ENCODE measurements at regions of chr21 and their contacts with region 1.

Region 1: GRCh38 chr21:37711836-37712568 is 204.3 kb downstream of the KCNJ6 start:
- DNase-seq: peak; percentile 81 to 89
- ATAC-seq: peak; percentile 82
- H3K4me3 ChIP-seq: no peak overlapping the region
- H3K27ac ChIP-seq: no peak overlapping the region
- H3K4me1 ChIP-seq: peaks cover 0 to 2% of the 10 kb centered on the region in 2 donors
- H3K27me3 ChIP-seq: no peaks in the 10 kb centered on the region

Region 2: GRCh38 chr21:37916310-37917051 is 204.5 kb after region 1 on chr21 and contains the start of gene KCNJ6:
- intact Hi-C with region 1: loop called (anchors 5 kb)
- DNase-seq: peak in 1 of 2 donors; percentile 56
- ATAC-seq: peak; percentile 48
- H3K4me3 ChIP-seq: peak within 1 kb of the TSS in 1 of 2 donors; percentile 11
- H3K27ac ChIP-seq: no peak within 1 kb of the TSS
- H3K4me1 ChIP-seq: no peaks in the 10 kb centered on the region
- H3K27me3 ChIP-seq: peaks cover 0 to 2% of the 10 kb centered on the region in 2 donors
- total RNA-seq, gene KCNJ6: 0.16 TPM in 1 of 2 donors, not detected in the other

Region 3: DNA sequence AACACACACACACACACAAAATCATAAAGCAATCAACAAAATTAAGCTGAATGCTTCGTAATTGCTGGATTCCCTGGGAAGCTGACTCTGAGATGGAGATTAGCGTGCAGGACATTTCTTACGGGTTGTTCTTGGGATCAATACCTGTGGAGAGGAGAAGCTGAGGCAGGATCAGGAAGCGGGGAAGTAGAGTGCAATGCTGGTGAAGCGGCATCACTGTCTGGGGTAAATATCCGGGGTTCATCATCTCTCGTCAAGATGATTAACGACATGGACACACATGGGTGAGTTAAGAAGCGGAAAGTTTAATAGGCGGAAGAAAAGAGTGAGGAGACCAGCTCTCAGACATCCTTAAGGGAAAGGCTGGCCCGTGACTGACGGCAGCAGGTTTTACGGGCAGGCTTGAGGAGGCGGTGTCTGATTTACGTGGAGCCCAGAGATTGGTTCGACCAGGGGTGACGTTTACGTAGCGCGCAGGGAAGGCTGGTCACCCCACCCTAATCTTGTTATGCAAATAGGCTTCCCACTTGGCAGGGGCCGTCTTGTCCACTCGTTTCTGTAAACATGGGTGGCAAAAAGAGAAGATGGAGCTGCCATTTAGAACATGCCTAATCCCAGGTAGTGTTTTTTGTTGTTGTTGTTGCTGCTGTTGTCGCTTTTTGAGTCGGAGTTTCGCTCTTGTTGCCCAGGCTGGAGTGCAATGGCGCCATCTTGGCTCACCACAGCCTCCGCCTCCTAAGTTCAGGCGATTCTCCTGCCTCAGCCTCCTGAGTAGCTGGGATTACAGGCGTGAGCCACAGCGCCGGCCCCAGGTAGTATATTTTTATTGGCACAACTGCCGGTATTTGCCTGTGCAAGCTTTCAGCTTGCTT is 409.2 kb after region 1 on chr21:
- intact Hi-C with region 1: loop called (anchors 2 to 5 kb)
- DNase-seq: no peak
- ATAC-seq: no peak
- H3K4me3 ChIP-seq: no peak overlapping the region
- H3K27ac ChIP-seq: no peak overlapping the region
- H3K4me1 ChIP-seq: peaks cover 0 to 1% of the 10 kb centered on the region in 2 donors
- H3K27me3 ChIP-seq: peaks cover 0 to 1% of the 10 kb centered on the region in 2 donors

Region 4: DNA sequence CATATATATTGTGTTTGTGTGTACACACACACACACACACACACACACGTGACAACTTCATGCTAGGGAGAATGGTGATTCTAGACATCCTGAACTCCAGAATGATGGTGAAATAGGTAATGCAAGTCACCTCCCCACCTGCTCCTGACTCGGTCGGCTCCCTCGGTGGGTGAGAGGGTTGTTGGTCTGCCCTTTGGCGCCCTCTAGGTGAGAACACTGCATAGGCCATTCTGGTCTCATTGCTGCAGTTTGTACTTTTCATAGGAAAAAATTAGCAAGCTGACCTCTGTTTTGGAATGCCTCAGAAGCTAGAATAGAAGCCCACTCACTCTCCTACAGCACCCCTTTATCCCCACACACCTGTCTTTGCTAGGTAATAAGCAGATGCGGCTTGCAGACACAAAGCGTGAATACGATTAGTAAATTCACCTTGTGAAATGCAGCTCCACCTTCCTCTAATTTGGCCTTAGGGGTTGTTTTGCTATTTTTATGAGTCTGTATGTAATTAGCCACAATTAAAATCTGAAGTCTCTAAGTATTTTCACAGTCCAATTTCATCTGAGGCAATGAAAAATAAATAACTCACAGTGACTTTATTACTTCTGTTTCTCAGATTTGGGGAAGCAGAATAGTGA is 414.8 kb after region 1 on chr21:
- intact Hi-C with region 1: loop called (anchors 2 to 5 kb)
- DNase-seq: peak; percentile 60 to 82
- ATAC-seq: peak; percentile 68
- H3K4me3 ChIP-seq: no peak overlapping the region
- H3K27ac ChIP-seq: no peak overlapping the region
- H3K4me1 ChIP-seq: peaks cover 0 to 1% of the 10 kb centered on the region in 2 donors
- H3K27me3 ChIP-seq: no peaks in the 10 kb centered on the region

Measured in aorta (tissue), 5 donors.